ENCODE measurements at regions of chr10 and their contacts with region 1.

Region 1: GRCh38 chr10:63465293-63466143 is at the start of gene JMJD1C:
- DNase-seq: peak; percentile 84 to 91 (median 86)
- ATAC-seq: peak; percentile 69 to 94 (median 90)
- H3K4me3 ChIP-seq: peak within 1 kb of the TSS; percentile 65 to 93 (median 86)
- H3K27ac ChIP-seq: peak within 1 kb of the TSS; percentile 87 to 96 (median 92)
- H3K4me1 ChIP-seq: peaks cover 0 to 40% (median 18%) of the 10 kb centered on the region in 12 donors
- H3K27me3 ChIP-seq: no peaks in the 10 kb centered on the region
- CTCF ChIP-seq: peak in 2 of 12 donors; percentile 7 to 40
- POLR2A ChIP-seq: peak in 1 of 2 donors; percentile 60
- total RNA-seq, gene JMJD1C: 27.0 to 54.6 (median 42.7) TPM

Region 2: DNA sequence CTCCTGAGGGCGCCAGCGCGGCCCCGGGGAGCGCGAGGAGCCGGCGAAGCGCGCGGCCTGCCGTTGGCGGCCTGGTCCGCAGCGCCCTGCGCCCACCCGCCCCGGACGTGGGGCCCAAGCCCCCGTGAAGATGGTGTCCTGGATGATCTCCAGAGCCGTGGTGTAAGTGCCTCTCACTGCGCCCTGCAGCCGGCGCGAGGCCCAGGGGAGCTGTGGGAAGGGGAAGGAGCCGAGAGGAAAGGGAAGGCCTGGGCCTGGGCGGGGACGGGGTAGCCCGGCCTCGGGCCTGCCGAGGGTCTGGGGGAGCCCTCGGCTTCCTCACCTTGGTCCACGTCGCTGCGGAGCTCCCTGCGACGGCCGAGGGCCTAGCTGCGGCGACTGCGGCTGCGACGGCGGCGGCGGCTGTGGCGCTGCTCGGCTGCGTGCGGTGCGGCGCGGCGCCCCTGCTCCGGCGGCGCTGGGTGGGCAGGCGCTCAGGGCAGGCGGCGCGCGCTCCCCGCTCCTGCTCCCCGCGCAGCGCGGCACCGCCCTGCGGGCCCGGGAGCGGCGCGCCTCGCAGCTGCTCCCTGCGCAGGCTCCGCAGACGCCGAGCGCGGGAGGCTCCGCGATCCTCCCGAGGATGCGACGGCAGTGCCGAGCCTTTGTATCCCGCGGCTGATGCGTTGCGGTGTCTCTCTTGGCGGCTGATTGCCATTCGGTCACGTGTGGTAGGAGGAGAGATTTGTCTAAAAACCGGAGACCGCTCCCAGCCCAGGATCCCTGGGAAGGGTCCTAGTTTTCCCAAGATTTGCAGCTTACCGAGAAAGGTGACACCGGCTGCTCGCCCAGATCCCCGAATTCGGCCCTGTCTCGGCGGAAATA is 56.1 kb after region 1 on chr10:
- intact Hi-C with region 1: loop called in 7 of 10 experiments (anchors 5 to 10 kb)
- DNase-seq: peak; percentile 69 to 88 (median 76)
- ATAC-seq: peak; percentile 15 to 91 (median 82)
- H3K4me3 ChIP-seq: peak overlapping the region; percentile 63 to 91 (median 78)
- H3K27ac ChIP-seq: peak overlapping the region; percentile 97 to 99 (median 98)
- H3K4me1 ChIP-seq: peaks cover 4 to 64% (median 49%) of the 10 kb centered on the region in 12 donors
- H3K27me3 ChIP-seq: no peaks in the 10 kb centered on the region
- CTCF ChIP-seq: no peak
- POLR2A ChIP-seq: peak in 1 of 2 donors; percentile 35

Region 3: DNA sequence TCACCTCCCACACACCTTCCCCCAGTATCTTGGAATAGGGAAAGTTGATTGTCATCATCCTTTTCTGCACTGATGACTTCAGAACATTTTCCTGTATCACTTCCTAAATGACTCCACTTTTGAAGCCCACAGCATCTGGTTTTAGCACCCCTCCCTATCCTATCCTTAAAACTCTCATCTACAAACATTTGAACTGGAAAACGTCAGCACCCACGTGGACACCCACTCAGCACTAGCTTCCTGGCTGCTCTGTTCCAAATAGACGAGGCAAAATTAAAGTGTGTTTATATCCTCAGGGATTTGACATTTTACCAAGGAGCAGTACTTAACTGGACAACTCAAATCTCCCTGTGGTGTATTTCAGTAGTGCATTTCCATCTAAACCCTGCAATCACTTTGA is 129.6 kb after region 1 on chr10:
- intact Hi-C with region 1: loop called in 1 of 10 experiments (anchors 10 kb)
- DNase-seq: peak in 3 of 5 donors; percentile 44 to 67 (median 53)
- ATAC-seq: peak; percentile 69 to 96 (median 86)
- H3K4me3 ChIP-seq: no peak overlapping the region
- H3K27ac ChIP-seq: peak overlapping the region in 3 of 12 donors; percentile 6 to 15 (median 12)
- H3K4me1 ChIP-seq: peaks cover 0 to 42% (median 4%) of the 10 kb centered on the region in 12 donors
- H3K27me3 ChIP-seq: no peaks in the 10 kb centered on the region
- CTCF ChIP-seq: peak in 5 of 12 donors; percentile 15 to 35 (median 32)
- POLR2A ChIP-seq: no peak

Measured in heart left ventricle (tissue), 16 donors.